ENCODE measurements at regions of chr16 and their contacts with region 1.

Region 1: DNA sequence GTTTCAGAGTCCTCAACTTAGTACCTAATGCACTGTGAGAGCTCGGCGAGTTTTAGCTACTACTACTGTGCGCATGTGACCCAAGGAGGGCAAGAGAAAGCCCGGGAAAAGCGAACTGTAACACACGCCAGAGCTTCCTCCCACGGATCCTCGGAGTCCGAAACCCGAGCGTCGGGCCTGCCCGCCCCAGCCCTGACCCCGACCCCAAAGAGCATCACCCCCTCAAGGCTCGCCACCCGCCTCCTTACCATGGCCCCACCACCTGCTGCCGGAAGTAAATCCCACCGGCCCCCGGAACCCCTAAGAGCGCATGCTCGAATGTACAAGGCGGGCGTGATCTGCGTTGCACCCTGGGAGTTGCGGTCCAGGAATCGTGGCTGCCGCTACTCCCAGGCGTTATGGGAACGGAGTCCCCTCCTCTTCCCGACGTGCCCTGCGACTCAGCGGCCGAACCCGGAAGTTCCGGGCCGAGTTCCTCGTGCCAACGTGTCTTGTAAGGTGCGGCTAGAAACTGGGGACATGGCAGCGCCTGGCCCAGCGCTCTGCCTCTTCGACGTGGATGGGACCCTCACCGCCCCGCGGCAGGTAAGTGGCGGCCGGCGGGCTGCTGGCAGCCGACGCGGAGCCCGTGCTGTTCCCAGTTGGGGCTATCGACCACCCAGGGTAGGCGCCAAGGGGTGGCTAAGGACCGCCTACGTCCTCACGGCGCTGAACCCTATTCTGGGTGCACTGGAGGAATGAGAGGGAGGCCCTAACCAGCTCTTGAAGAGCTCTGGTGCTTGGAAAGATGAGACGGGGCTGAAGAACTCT is at the starts of genes PMM2 and TMEM186:
- DNase-seq: peak; percentile 94 to 96
- ATAC-seq: peak; percentile 99 to 100 (median 100)
- H3K4me3 ChIP-seq: peak within 1 kb of the TSS; percentile 67 to 98 (median 86)
- H3K27ac ChIP-seq: peak within 1 kb of the TSS; percentile 25 to 89 (median 82)
- H3K4me1 ChIP-seq: peaks cover 9 to 43% (median 30%) of the 10 kb centered on the region in 9 donors
- H3K27me3 ChIP-seq: no peaks in the 10 kb centered on the region
- CTCF ChIP-seq: no peak
- total RNA-seq, gene PMM2: 11.5 to 25.9 (median 13.9) TPM
- total RNA-seq, gene TMEM186: 9.5 to 15.1 (median 13.9) TPM

Region 2: GRCh38 chr16:8572919-8573724 is 224.4 kb before region 1 on chr16:
- intact Hi-C with region 1: loop called in 4 of 10 experiments (anchors 5 to 10 kb)
- DNase-seq: no peak
- ATAC-seq: peak in 1 of 8 donors; percentile 32
- H3K4me3 ChIP-seq: no peak overlapping the region
- H3K27ac ChIP-seq: no peak overlapping the region
- H3K4me1 ChIP-seq: peaks cover 0 to 14% (median 0%) of the 10 kb centered on the region in 9 donors
- H3K27me3 ChIP-seq: peaks cover 0 to 52% (median 34%) of the 10 kb centered on the region in 7 donors
- CTCF ChIP-seq: peak in 7 of 9 donors; percentile 27 to 55 (median 46)

Region 3: GRCh38 chr16:8660841-8661301 is 136.7 kb before region 1 on chr16:
- intact Hi-C with region 1: loop called in 8 of 10 experiments (anchors 2 to 5 kb)
- DNase-seq: peak; percentile 24 to 40
- ATAC-seq: peak; percentile 49 to 90 (median 84)
- H3K4me3 ChIP-seq: no peak overlapping the region
- H3K27ac ChIP-seq: no peak overlapping the region
- H3K4me1 ChIP-seq: no peaks in the 10 kb centered on the region
- H3K27me3 ChIP-seq: no peaks in the 10 kb centered on the region
- CTCF ChIP-seq: peak in 8 of 9 donors; percentile 25 to 71 (median 64)

Region 4: GRCh38 chr16:8868416-8869211 is 71.0 kb after region 1 on chr16 and contains the start of gene CARHSP1:
- intact Hi-C with region 1: loop called in 7 of 10 experiments (anchors 1 to 10 kb)
- DNase-seq: peak; percentile 86 to 90
- ATAC-seq: peak; percentile 83 to 93 (median 89)
- H3K4me3 ChIP-seq: peak within 1 kb of the TSS; percentile 54 to 96 (median 78)
- H3K27ac ChIP-seq: peak within 1 kb of the TSS; percentile 83 to 96 (median 86)
- H3K4me1 ChIP-seq: peaks cover 21 to 63% (median 47%) of the 10 kb centered on the region in 9 donors
- H3K27me3 ChIP-seq: no peaks in the 10 kb centered on the region
- CTCF ChIP-seq: no peak
- total RNA-seq, gene CARHSP1: 12.7 to 35.7 (median 24.8) TPM

Region 5: GRCh38 chr16:9384141-9384540 is 586.6 kb after region 1 on chr16:
- intact Hi-C with region 1: no loop called
- DNase-seq: no peak
- ATAC-seq: peak in 2 of 8 donors; percentile 21 to 32
- H3K4me3 ChIP-seq: no peak overlapping the region
- H3K27ac ChIP-seq: no peak overlapping the region
- H3K4me1 ChIP-seq: peaks cover 0 to 5% (median 0%) of the 10 kb centered on the region in 9 donors
- H3K27me3 ChIP-seq: no peaks in the 10 kb centered on the region
- CTCF ChIP-seq: no peak